ENCODE measurements at regions of chr1 and their contacts with region 1.

Region 1: GRCh38 chr1:68111519-68112436 is 61.4 kb upstream of the DIRAS3 start:
- DNase-seq: peak; percentile 88
- H3K4me3 ChIP-seq: no peak overlapping the region
- H3K27ac ChIP-seq: peak overlapping the region in 3 of 4 donors; percentile 10 to 53 (median 24)
- H3K4me1 ChIP-seq: peaks cover 0 to 29% (median 21%) of the 10 kb centered on the region in 4 donors
- H3K27me3 ChIP-seq: no peaks in the 10 kb centered on the region
- CTCF ChIP-seq: peak; percentile 50 to 69 (median 56)
- EP300 ChIP-seq: peak in 1 of 4 donors; percentile 13
- POLR2A ChIP-seq: no peak

Region 2: GRCh38 chr1:67853704-67854103 is 258.1 kb before region 1 on chr1:
- intact Hi-C with region 1: loop called (anchors 1 kb)
- DNase-seq: no peak
- H3K4me3 ChIP-seq: no peak overlapping the region
- H3K27ac ChIP-seq: no peak overlapping the region
- H3K4me1 ChIP-seq: peaks cover 0 to 13% (median 11%) of the 10 kb centered on the region in 4 donors
- H3K27me3 ChIP-seq: no peaks in the 10 kb centered on the region
- CTCF ChIP-seq: peak in 3 of 4 experiments; percentile 41 to 69 (median 52)
- EP300 ChIP-seq: no peak
- POLR2A ChIP-seq: no peak